Posterior cingulate gyrus (tissue), 11 donors: ENCODE measurements at regions of chr6 and their contacts with region 1.

Region 1: GRCh38 chr6:88982720-88983119 is 19.3 kb upstream of the RNGTT start:
- DNase-seq: no peak

Region 2: DNA sequence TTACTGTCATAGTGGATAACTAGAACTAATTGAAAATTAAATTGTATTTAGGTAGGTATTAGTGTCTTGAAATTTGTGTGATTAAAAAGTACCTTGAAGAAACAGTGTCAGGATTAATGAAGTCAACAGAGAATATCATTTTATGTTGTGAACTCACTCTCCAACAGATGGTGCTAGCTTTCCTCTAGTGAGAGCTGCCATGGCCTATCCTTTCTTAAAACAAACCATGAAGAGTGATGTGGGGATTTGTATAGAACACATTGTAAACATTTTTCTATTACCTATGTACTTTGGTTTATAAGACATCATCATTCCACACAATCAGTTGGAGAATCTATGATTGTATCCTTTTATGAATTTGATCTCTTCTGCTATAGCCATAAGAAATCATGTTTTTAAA is 139.9 kb after region 1 on chr6:
- intact Hi-C with region 1: loop called (anchors 10 kb)
- DNase-seq: no peak

Region 3: GRCh38 chr6:89242574-89243330 is 260.0 kb after region 1 on chr6:
- intact Hi-C with region 1: loop called (anchors 1 kb)
- DNase-seq: no peak